Activated CD8-positive, alpha-beta memory T cell treated with anti-CD3 and anti-CD28 coated beads, Interleukin-2, amount 10 ng/mL, durations not matched to agents 7 days and 5 days (primary cell): ENCODE measurements at regions of chr2 and their contacts with region 1.

Region 1: DNA sequence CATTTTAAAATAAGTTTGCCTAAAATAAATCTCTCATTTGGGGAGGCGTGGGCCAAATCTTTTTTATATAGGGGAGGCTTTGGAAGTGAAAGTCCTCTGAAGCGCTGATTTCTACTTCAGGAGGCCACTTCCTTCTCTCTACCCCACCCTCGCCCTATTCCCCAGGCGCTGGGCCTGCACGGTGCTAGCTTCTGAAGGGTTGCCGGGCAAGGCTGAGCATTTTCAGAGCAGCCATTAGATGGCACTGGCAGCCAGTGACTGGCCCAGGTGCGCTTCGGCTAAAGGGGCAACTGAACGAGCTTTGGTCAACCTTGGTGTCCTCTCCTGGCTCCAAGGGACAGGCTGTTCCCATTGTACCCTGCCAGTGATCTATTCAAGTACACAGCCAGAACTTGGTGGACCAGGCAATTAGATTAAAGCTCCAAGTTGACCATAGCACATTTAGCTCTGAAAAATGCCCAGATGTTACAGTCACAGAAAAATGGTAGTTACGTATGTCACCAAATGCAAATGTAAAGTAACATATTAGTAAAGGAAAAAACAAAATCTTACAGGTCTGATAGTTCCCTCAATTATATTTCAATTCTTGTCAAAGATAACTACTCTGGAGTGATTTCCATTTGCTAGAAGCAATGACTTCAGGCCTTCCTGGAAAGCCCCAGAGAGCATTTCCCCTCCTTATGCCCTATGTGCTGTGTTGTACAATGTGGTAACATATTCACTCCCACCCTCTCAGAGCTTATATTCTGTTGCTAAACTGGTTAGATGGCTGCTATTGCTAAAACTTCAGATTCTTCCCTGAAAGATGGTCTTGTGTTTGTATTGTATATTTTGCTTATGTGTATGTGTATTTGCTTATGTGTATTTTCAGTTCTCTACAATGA is 2.1 kb downstream of the POMC start:
- DNase-seq: peak; percentile 65
- ATAC-seq: peak; percentile 56
- H3K4me3 Mint-ChIP-seq: no peak overlapping the region
- H3K27ac Mint-ChIP-seq: no peak overlapping the region
- H3K4me1 Mint-ChIP-seq: peaks cover 24% of the 10 kb centered on the region
- H3K27me3 Mint-ChIP-seq: peaks cover 60% of the 10 kb centered on the region

Region 2: GRCh38 chr2:25197336-25198208 is 31.3 kb after region 1 on chr2:
- CTCF ChIA-PET with region 1: interaction called, 42 read pairs
- DNase-seq: no peak
- ATAC-seq: no peak
- H3K4me3 Mint-ChIP-seq: no peak overlapping the region
- H3K27ac Mint-ChIP-seq: no peak overlapping the region
- H3K4me1 Mint-ChIP-seq: peaks cover 4% of the 10 kb centered on the region
- H3K27me3 Mint-ChIP-seq: peaks cover 4% of the 10 kb centered on the region

Region 3: DNA sequence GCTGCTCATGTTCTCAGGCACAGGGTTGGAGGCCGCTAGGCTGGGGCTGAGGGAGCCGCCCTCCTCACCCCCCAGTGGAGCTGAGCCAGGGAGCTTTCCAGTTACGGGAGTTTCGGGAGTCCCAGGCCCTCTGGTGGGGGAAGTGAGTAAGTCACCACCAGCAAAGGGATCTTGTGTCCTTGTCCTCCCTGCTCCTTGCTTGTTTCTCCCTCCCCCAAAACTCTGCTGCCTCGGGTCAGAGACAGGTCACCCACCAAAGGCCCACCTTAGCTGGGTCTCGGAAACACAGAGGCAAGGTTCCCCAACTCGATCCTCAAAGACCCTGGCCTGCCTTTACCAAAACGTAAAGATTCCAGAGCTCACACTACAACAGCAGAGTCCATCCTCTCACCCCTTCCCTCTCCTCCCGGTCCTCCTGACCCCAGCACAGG is 62.6 kb after region 1 on chr2:
- CTCF ChIA-PET with region 1: interaction called, 11 read pairs
- DNase-seq: no peak
- ATAC-seq: peak; percentile 21
- H3K4me3 Mint-ChIP-seq: no peak overlapping the region
- H3K27ac Mint-ChIP-seq: no peak overlapping the region
- H3K4me1 Mint-ChIP-seq: peaks cover 23% of the 10 kb centered on the region
- H3K27me3 Mint-ChIP-seq: no peaks in the 10 kb centered on the region

Region 4: GRCh38 chr2:25567406-25567805 is 401.2 kb after region 1 on chr2:
- CTCF ChIA-PET with region 1: interaction called, 12 read pairs
- DNase-seq: no peak
- ATAC-seq: peak; percentile 81
- H3K4me3 Mint-ChIP-seq: no peak overlapping the region
- H3K27ac Mint-ChIP-seq: peak overlapping the region; percentile 82
- H3K4me1 Mint-ChIP-seq: peaks cover 19% of the 10 kb centered on the region
- H3K27me3 Mint-ChIP-seq: no peaks in the 10 kb centered on the region